Activated CD4-positive, alpha-beta T cell treated with anti-CD3 and anti-CD28 coated beads for 36 hours (primary cell): ENCODE measurements at regions of chr9 and their contacts with region 1.

Region 1: DNA sequence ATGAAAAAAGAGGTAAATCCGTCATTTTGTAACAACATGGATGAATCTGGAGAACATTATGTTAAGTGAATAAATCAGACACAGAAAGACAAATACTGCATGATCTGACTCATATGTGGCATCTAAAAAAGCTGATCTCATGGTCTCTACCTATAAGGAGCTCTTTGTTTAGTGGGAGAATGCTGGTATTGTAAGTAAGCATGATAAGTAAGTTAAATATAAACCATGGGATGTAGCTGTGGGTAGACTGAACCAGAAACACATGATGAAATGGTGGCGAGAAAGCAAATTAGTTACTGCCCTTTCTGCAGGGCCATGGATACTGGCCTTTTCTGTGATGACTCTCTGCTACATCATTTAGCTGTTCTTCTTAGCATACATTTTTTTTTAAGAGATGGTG is 66.4 kb upstream of the RUSC2 start:
- DNase-seq: no peak
- ATAC-seq: no peak
- H3K4me3 Mint-ChIP-seq: no peak overlapping the region
- H3K27ac Mint-ChIP-seq: no peak overlapping the region
- H3K4me1 Mint-ChIP-seq: no peaks in the 10 kb centered on the region
- H3K27me3 Mint-ChIP-seq: peaks cover 26% of the 10 kb centered on the region

Region 2: DNA sequence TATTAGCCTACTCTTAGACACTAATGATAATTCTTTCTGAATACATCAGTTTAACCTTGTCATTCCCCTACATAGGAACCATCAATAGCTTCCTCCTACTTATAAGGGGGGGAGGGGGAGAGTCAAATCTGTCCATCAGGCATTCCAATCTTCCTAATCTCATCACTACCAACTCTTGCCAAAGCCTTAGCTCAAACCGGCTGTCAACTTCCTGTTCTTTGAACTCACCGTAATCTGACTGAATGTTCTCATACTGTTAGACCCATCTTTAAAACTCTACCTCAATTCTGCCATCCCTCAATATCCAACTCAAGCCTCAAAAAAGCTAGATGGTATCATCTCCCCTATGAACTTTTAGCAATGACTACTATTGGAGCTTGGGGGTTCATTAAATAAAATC is 1018.5 kb after region 1 on chr9:
- CTCF ChIA-PET with region 1: no interaction called
- POLR2A ChIA-PET with region 1: no interaction called
- intact Hi-C with region 1: loop called in 1 of 2 experiments (anchors 5 kb)
- DNase-seq: no peak
- ATAC-seq: no peak
- H3K4me3 Mint-ChIP-seq: no peak overlapping the region
- H3K27ac Mint-ChIP-seq: no peak overlapping the region
- H3K4me1 Mint-ChIP-seq: peaks cover 43% of the 10 kb centered on the region
- H3K27me3 Mint-ChIP-seq: no peaks in the 10 kb centered on the region